ENCODE measurements at regions of chr7 and their contacts with region 1.

Region 1: GRCh38 chr7:116173051-116174028 is 37.0 kb upstream of the TES start:
- DNase-seq: peak in 4 of 9 experiments; percentile 16 to 73 (median 58)
- ATAC-seq: peak; percentile 63
- H3K4me3 ChIP-seq: no peak overlapping the region
- H3K4me3 Mint-ChIP-seq: no peak overlapping the region
- H3K27ac ChIP-seq: no peak overlapping the region
- H3K27ac Mint-ChIP-seq: no peak overlapping the region
- H3K4me1 ChIP-seq: no peaks in the 10 kb centered on the region
- H3K4me1 Mint-ChIP-seq: no peaks in the 10 kb centered on the region
- H3K27me3 ChIP-seq: no peaks in the 10 kb centered on the region
- H3K27me3 Mint-ChIP-seq: peaks cover 11% of the 10 kb centered on the region
- CTCF ChIP-seq: peak; percentile 77

Region 2: GRCh38 chr7:116024826-116025809 is 148.2 kb before region 1 on chr7:
- CTCF ChIA-PET with region 1: no interaction called
- POLR2A ChIA-PET with region 1: no interaction called
- intact Hi-C with region 1: no loop called
- DNase-seq: peak in 1 of 9 experiments; percentile 10
- ATAC-seq: no peak
- H3K4me3 ChIP-seq: no peak overlapping the region
- H3K4me3 Mint-ChIP-seq: no peak overlapping the region
- H3K27ac ChIP-seq: no peak overlapping the region
- H3K27ac Mint-ChIP-seq: no peak overlapping the region
- H3K4me1 ChIP-seq: no peaks in the 10 kb centered on the region
- H3K4me1 Mint-ChIP-seq: no peaks in the 10 kb centered on the region
- H3K27me3 ChIP-seq: no peaks in the 10 kb centered on the region
- H3K27me3 Mint-ChIP-seq: peaks cover 2% of the 10 kb centered on the region
- CTCF ChIP-seq: no peak

Region 3: DNA sequence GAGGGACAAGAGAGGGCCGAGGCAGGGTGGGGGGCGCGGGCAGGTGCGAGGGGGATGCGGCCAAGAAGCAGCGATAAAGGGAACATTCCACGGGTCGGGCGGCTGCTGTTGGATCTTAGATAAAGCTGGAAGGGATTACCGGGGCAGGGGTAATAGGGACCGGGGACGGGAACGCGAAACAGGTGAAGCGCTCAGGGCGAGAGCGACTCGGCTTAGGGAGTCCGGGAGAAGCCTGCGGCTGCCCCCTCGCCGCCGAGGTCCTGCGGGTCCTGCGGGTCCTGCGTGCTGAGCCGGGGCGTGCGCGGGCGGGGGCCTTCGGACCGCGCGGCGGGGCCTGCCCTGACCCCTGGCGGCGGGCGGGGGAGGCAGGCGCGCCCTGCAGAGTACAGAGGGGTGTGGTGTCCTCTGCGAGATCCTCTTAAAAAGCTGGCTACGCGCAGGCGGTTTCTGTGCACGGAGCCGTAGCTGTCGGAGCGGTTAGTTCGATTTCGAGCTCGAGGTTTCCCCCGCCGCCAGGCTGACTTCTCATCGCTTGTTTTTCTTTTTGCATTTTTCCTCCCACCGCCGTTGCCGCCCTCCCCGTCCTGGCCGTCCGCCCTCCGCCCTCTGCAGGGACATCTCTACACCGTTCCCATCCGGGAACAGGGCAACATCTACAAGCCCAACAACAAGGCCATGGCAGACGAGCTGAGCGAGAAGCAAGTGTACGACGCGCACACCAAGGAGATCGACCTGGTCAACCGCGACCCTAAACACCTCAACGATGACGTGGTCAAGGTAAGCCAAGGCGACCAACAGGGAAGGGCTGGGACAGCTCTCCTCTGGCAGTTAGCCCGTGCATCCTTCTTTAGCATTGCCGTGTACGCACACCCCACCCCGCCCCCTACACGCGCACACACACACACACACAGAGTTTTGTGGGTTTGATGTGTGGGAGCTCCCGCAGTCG is 352.8 kb after region 1 on chr7:
- CTCF ChIA-PET with region 1: interaction called, 13 read pairs
- POLR2A ChIA-PET with region 1: no interaction called
- intact Hi-C with region 1: loop called (anchors 2 to 5 kb)
- DNase-seq: peak; percentile 19 to 80 (median 59)
- ATAC-seq: peak; percentile 92
- H3K4me3 ChIP-seq: peak overlapping the region; percentile 59 to 67
- H3K4me3 Mint-ChIP-seq: peak overlapping the region; percentile 83
- H3K27ac ChIP-seq: no peak overlapping the region
- H3K27ac Mint-ChIP-seq: no peak overlapping the region
- H3K4me1 ChIP-seq: peaks cover 21% of the 10 kb centered on the region
- H3K4me1 Mint-ChIP-seq: peaks cover 25% of the 10 kb centered on the region
- H3K27me3 ChIP-seq: peaks cover 15 to 31% of the 10 kb centered on the region in 2 experiments
- H3K27me3 Mint-ChIP-seq: peaks cover 60% of the 10 kb centered on the region
- CTCF ChIP-seq: peak; percentile 59

Region 4: GRCh38 chr7:116809636-116810266 is 636.4 kb after region 1 on chr7:
- CTCF ChIA-PET with region 1: interaction called, 8 read pairs
- POLR2A ChIA-PET with region 1: no interaction called
- intact Hi-C with region 1: loop called (anchors 1 kb)
- DNase-seq: peak in 2 of 9 experiments; percentile 52 to 60
- ATAC-seq: no peak
- H3K4me3 ChIP-seq: no peak overlapping the region
- H3K4me3 Mint-ChIP-seq: no peak overlapping the region
- H3K27ac ChIP-seq: no peak overlapping the region
- H3K27ac Mint-ChIP-seq: no peak overlapping the region
- H3K4me1 ChIP-seq: no peaks in the 10 kb centered on the region
- H3K4me1 Mint-ChIP-seq: no peaks in the 10 kb centered on the region
- H3K27me3 ChIP-seq: no peaks in the 10 kb centered on the region
- H3K27me3 Mint-ChIP-seq: peaks cover 6% of the 10 kb centered on the region
- CTCF ChIP-seq: peak; percentile 58

Region 5: DNA sequence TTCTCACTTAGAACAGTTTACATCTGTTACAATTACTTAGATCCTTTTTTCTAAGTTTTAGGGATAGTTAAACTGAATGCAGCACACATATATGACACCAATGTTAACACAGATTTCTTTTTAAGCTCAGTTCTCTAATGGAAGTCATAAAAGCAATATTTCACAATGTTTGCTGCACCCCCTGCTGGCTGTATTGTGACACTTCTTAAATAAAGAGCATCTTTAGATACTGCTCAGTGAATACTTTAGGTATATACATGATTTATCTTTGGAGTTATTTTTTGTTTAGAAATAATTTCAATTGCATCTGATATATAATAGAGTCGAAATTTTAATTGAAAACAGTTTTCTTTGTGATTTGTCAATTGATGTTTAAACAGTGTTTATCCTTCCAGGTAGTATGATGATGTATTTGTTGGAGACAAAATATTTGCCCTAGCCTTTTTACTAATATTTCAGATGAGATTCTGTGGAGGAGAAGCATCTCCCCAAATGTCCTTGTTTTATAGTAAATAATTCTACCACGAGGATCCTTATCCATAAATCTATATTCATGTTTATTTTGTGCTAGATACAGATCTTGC is 954.3 kb after region 1 on chr7:
- CTCF ChIA-PET with region 1: interaction called, 4 read pairs
- POLR2A ChIA-PET with region 1: no interaction called
- intact Hi-C with region 1: loop called (anchors 5 kb)
- DNase-seq: peak in 8 of 9 experiments; percentile 20 to 69 (median 51)
- ATAC-seq: peak; percentile 73
- H3K4me3 ChIP-seq: no peak overlapping the region
- H3K4me3 Mint-ChIP-seq: no peak overlapping the region
- H3K27ac ChIP-seq: no peak overlapping the region
- H3K27ac Mint-ChIP-seq: no peak overlapping the region
- H3K4me1 ChIP-seq: no peaks in the 10 kb centered on the region
- H3K4me1 Mint-ChIP-seq: peaks cover 3% of the 10 kb centered on the region
- H3K27me3 ChIP-seq: no peaks in the 10 kb centered on the region
- H3K27me3 Mint-ChIP-seq: no peaks in the 10 kb centered on the region
- CTCF ChIP-seq: peak; percentile 92

Region 6: GRCh38 chr7:118153551-118154177 is 1980.3 kb after region 1 on chr7:
- CTCF ChIA-PET with region 1: no interaction called
- POLR2A ChIA-PET with region 1: no interaction called
- intact Hi-C with region 1: loop called in 1 of 2 experiments (anchors 10 kb)
- DNase-seq: peak in 4 of 9 experiments; percentile 6 to 57 (median 30)
- ATAC-seq: peak; percentile 63
- H3K4me3 ChIP-seq: no peak overlapping the region
- H3K4me3 Mint-ChIP-seq: no peak overlapping the region
- H3K27ac ChIP-seq: no peak overlapping the region
- H3K27ac Mint-ChIP-seq: no peak overlapping the region
- H3K4me1 ChIP-seq: no peaks in the 10 kb centered on the region
- H3K4me1 Mint-ChIP-seq: no peaks in the 10 kb centered on the region
- H3K27me3 ChIP-seq: peaks cover 0 to 3% of the 10 kb centered on the region in 2 experiments
- H3K27me3 Mint-ChIP-seq: peaks cover 34% of the 10 kb centered on the region
- CTCF ChIP-seq: peak; percentile 84

Measured in CD8-positive, alpha-beta T cell (primary cell).